ENCODE measurements at regions of chr10 and their contacts with region 1.

Region 1: GRCh38 chr10:3740157-3740871 is 44.7 kb downstream of the KLF6 start:
- DNase-seq: peak in 2 of 5 donors; percentile 6 to 21
- H3K4me3 ChIP-seq: no peak overlapping the region
- H3K4me3 Mint-ChIP-seq: peak overlapping the region in 6 of 8 donors; percentile 13 to 61 (median 46)
- H3K27ac ChIP-seq: no peak overlapping the region
- H3K27ac Mint-ChIP-seq: peak overlapping the region in 6 of 7 donors; percentile 2 to 82 (median 54)
- H3K4me1 ChIP-seq: peaks cover 17% of the 10 kb centered on the region
- H3K4me1 Mint-ChIP-seq: peaks cover 19 to 31% (median 23%) of the 10 kb centered on the region in 4 donors
- H3K27me3 ChIP-seq: no peaks in the 10 kb centered on the region
- H3K27me3 Mint-ChIP-seq: no peaks in the 10 kb centered on the region

Region 2: GRCh38 chr10:3757638-3758490 is 17.6 kb after region 1 on chr10:
- CTCF ChIA-PET with region 1: interaction called, 4 read pairs
- POLR2A ChIA-PET with region 1: interaction called, 20 read pairs
- intact Hi-C with region 1: no loop called
- DNase-seq: peak; percentile 43 to 90 (median 46)
- H3K4me3 ChIP-seq: peak overlapping the region in 1 of 2 donors; percentile 1
- H3K4me3 Mint-ChIP-seq: peak overlapping the region; percentile 26 to 90 (median 72)
- H3K27ac ChIP-seq: peak overlapping the region; percentile 74
- H3K27ac Mint-ChIP-seq: peak overlapping the region; percentile 93 to 98 (median 97)
- H3K4me1 ChIP-seq: peaks cover 81% of the 10 kb centered on the region
- H3K4me1 Mint-ChIP-seq: peaks cover 41 to 81% (median 61%) of the 10 kb centered on the region in 4 donors
- H3K27me3 ChIP-seq: no peaks in the 10 kb centered on the region
- H3K27me3 Mint-ChIP-seq: no peaks in the 10 kb centered on the region

Region 3: GRCh38 chr10:3763035-3763456 is 22.7 kb after region 1 on chr10:
- CTCF ChIA-PET with region 1: interaction called, 4 read pairs
- POLR2A ChIA-PET with region 1: interaction called, 20 read pairs
- intact Hi-C with region 1: no loop called
- DNase-seq: no peak
- H3K4me3 ChIP-seq: no peak overlapping the region
- H3K4me3 Mint-ChIP-seq: peak overlapping the region; percentile 20 to 72 (median 62)
- H3K27ac ChIP-seq: no peak overlapping the region
- H3K27ac Mint-ChIP-seq: peak overlapping the region in 6 of 7 donors; percentile 59 to 88 (median 82)
- H3K4me1 ChIP-seq: peaks cover 91% of the 10 kb centered on the region
- H3K4me1 Mint-ChIP-seq: peaks cover 53 to 92% (median 75%) of the 10 kb centered on the region in 4 donors
- H3K27me3 ChIP-seq: no peaks in the 10 kb centered on the region
- H3K27me3 Mint-ChIP-seq: no peaks in the 10 kb centered on the region